Activated CD4-positive, alpha-beta T cell treated with anti-CD3 and anti-CD28 coated beads for 36 hours (primary cell): ENCODE measurements at regions of chr11 and their contacts with region 1.

Region 1: GRCh38 chr11:44823006-44823405 is 96.2 kb downstream of the TSPAN18 start:
- DNase-seq: peak; percentile 25
- ATAC-seq: peak; percentile 53
- H3K4me3 Mint-ChIP-seq: no peak overlapping the region
- H3K27ac Mint-ChIP-seq: no peak overlapping the region
- H3K4me1 Mint-ChIP-seq: no peaks in the 10 kb centered on the region
- H3K27me3 Mint-ChIP-seq: no peaks in the 10 kb centered on the region

Region 2: GRCh38 chr11:44860346-44860745 is 37.3 kb after region 1 on chr11:
- CTCF ChIA-PET with region 1: no interaction called
- POLR2A ChIA-PET with region 1: no interaction called
- intact Hi-C with region 1: no loop called
- DNase-seq: no peak
- ATAC-seq: no peak
- H3K4me3 Mint-ChIP-seq: no peak overlapping the region
- H3K27ac Mint-ChIP-seq: no peak overlapping the region
- H3K4me1 Mint-ChIP-seq: peaks cover 35% of the 10 kb centered on the region
- H3K27me3 Mint-ChIP-seq: peaks cover 42% of the 10 kb centered on the region

Region 3: DNA sequence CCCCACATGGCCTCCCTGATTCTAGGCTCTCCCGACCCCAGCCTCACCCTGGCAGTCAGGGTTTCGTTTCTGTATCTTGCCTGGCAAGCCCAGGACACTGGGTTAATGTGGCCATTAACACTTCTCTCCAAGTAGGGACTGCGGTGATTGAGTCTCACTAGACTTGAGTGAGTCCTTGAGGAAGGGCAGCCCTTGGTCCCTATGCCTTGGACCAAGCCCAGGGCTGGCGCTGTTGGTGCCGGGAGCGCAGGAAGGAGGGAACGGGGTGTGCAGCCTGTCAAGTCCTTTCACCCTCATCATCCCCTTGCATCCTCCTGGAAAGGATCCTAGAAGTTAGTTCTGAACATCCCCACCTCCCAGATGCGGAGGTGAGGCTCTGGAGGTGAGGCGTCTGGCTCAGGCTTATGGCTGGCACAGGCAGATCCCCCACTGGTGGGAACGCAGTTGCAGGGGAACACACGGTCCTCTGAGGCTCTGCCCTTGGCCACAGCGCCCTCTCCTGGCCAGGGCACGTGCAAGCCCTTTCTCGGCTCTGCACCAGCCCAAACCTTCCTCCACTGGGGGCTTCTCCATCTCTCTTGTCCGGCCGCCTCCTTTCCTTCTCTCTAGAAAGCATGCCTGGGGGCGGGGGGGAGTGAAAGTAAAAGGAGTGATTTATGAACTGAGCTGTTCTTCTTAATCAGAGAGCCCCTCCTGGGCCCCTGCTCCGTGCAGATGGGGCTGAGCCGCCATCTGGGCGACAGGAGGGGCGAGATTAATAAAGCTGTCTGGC is 71.0 kb after region 1 on chr11:
- CTCF ChIA-PET with region 1: no interaction called
- POLR2A ChIA-PET with region 1: no interaction called
- intact Hi-C with region 1: loop called in 1 of 2 experiments (anchors 5 kb)
- DNase-seq: peak; percentile 79
- ATAC-seq: peak; percentile 93
- H3K4me3 Mint-ChIP-seq: no peak overlapping the region
- H3K27ac Mint-ChIP-seq: no peak overlapping the region
- H3K4me1 Mint-ChIP-seq: peaks cover 1% of the 10 kb centered on the region
- H3K27me3 Mint-ChIP-seq: no peaks in the 10 kb centered on the region